Gastrocnemius medialis (tissue), 4 donors: ENCODE measurements at regions of chr16 and their contacts with region 1.

Region 1: GRCh38 chr16:87982491-87983415 is 31.5 kb downstream of the BANP start:
- DNase-seq: no peak
- ATAC-seq: no peak
- H3K4me3 ChIP-seq: no peak overlapping the region
- H3K27ac ChIP-seq: no peak overlapping the region
- H3K4me1 ChIP-seq: peaks cover 0 to 6% of the 10 kb centered on the region in 2 donors
- H3K27me3 ChIP-seq: no peaks in the 10 kb centered on the region
- CTCF ChIP-seq: no peak
- POLR2A ChIP-seq: no peak

Region 2: DNA sequence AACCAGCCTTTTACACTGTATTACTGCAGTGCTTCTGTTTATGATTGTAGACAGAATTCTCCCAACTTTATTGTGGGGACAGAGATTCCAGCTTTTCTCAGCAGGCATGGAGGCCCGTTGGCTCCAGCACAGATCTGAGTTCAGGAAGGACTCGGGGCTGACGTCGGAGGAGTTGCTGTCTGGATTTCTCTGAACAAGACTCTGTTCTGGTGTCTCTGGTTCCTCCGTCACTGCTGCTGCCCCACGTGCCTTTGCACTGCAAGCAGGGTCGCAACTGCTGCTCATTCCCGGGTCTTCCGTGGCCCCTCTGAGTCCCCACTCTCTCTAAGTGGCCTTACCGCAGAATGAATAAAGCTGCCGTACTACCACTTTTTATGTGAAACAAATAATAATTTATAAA is 56.8 kb after region 1 on chr16:
- in situ Hi-C with region 1: no loop called
- intact Hi-C with region 1: no loop called
- DNase-seq: no peak
- ATAC-seq: no peak
- H3K4me3 ChIP-seq: no peak overlapping the region
- H3K27ac ChIP-seq: no peak overlapping the region
- H3K4me1 ChIP-seq: no peaks in the 10 kb centered on the region
- H3K27me3 ChIP-seq: no peaks in the 10 kb centered on the region
- CTCF ChIP-seq: no peak
- POLR2A ChIP-seq: no peak

Region 3: DNA sequence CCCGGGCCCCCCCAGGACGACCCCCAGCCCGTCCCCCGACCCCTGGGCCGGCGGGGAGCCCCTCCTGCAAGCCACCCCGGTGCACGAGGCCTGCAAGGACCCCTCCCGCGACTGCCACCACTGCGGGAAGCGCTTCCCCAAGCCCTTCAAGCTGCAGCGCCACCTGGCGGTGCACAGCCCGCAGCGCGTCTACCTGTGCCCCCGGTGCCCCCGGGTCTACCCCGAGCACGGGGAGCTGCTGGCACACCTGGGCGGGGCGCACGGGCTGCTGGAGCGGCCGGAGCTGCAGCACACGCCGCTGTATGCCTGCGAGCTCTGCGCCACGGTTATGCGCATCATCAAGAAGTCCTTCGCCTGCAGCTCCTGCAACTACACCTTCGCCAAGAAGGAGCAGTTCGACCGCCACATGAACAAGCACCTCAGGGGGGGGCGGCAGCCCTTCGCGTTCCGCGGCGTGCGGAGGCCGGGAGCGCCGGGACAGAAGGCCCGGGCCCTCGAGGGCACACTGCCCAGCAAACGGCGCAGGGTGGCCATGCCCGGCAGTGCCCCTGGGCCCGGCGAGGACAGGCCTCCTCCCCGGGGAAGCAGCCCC is 454.7 kb after region 1 on chr16:
- in situ Hi-C with region 1: no loop called
- intact Hi-C with region 1: loop called (anchors 10 kb)
- DNase-seq: no peak
- ATAC-seq: peak in 1 of 2 donors; percentile 26
- H3K4me3 ChIP-seq: no peak overlapping the region
- H3K27ac ChIP-seq: no peak overlapping the region
- H3K4me1 ChIP-seq: no peaks in the 10 kb centered on the region
- H3K27me3 ChIP-seq: peaks cover 3 to 10% (median 10%) of the 10 kb centered on the region in 3 donors
- CTCF ChIP-seq: peak; percentile 77 to 93 (median 92)
- POLR2A ChIP-seq: no peak